Tibial artery (tissue), 4 donors: ENCODE measurements at regions of chr19 and their contacts with region 1.

Region 1: GRCh38 chr19:12733369-12734176 is 911 bp downstream of the TRIR start:
- DNase-seq: no peak
- H3K4me3 ChIP-seq: peak overlapping the region; percentile 91 to 100
- H3K27ac ChIP-seq: peak overlapping the region; percentile 94 to 97
- H3K4me1 ChIP-seq: peaks cover 5 to 51% (median 39%) of the 10 kb centered on the region in 4 donors
- H3K27me3 ChIP-seq: no peaks in the 10 kb centered on the region
- CTCF ChIP-seq: no peak

Region 2: DNA sequence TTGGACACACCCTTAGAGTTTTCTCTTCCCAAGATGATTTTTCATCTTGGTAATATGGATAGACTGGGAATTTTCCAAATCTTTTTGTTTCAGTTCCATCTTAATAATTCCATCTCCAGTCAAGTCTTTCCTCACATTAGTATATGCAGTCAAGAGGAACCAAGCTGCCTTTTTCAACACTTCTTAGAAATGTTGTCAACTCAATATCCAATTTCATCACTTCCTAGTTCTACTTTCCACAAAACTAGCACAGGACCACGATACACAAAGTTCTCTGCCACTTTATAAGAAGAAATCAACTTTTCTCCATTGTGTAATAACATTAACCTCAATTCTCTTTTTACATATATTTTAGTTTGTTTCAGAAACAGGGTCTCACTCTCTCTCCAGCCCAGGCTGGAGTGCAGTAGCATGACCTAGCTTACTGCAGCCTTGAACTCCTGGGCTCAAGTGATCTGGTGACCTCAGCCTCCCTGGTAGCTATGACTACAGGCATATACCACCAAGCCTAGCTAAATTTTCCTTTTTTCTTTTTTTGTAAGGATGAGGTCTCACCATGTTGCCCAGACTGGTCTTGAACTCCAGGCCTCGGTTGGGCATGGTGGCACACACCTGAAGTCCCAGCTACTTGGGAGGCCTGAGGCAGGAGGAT is 308.2 kb before region 1 on chr19:
- intact Hi-C with region 1: no loop called
- DNase-seq: no peak
- H3K4me3 ChIP-seq: no peak overlapping the region
- H3K27ac ChIP-seq: no peak overlapping the region
- H3K4me1 ChIP-seq: no peaks in the 10 kb centered on the region
- H3K27me3 ChIP-seq: no peaks in the 10 kb centered on the region
- CTCF ChIP-seq: no peak

Region 3: GRCh38 chr19:12596927-12597548 is 136.5 kb before region 1 on chr19:
- intact Hi-C with region 1: no loop called
- DNase-seq: peak in 1 of 2 donors; percentile 47
- H3K4me3 ChIP-seq: no peak overlapping the region
- H3K27ac ChIP-seq: no peak overlapping the region
- H3K4me1 ChIP-seq: no peaks in the 10 kb centered on the region
- H3K27me3 ChIP-seq: no peaks in the 10 kb centered on the region
- CTCF ChIP-seq: no peak

Region 4: DNA sequence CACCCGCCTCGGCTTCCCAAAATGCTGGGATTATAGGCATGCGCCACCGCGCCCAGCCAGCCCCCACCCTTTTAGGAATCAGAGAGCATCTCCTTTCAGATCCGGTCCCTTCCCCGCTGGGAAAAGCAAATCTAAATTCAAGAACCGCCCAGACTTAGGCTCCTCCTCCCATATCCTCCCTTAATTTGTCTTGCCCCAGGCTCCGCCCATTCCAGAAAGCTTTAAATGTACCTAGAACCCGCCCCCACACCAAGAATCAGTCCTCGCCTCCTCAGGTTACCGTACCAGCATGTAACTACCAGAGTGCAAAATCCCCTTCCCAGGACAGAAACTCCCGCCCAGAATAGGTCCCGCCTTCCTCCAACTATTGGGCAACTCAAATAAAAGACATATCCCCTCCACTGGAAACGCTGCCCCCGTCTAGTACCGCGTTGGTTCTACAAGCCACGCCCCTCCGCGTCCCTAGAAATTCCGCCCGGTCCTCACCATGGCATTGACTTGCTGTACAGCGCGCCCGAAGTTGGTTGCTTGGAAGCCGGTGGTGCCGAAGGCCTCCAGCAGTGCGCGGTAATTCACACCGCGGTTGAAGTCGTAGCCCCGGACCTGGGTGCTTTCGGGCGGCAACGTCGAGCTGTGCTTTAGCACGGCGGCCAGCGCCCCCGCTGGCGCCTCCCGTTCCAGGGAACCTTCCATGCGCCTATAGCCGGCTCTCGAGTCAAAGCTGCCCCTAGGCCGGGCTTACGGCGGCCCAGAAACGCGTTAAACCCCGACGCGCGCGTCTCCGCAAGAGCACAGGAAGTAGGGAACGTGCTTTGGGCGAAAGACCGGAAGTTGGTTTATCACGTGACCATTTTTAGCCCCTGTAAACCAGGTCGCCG is 52.3 kb before region 1 on chr19 and contains the start of gene DHPS:
- intact Hi-C with region 1: loop called (anchors 2 kb)
- DNase-seq: peak; percentile 94 to 96
- H3K4me3 ChIP-seq: peak within 1 kb of the TSS; percentile 81 to 85
- H3K27ac ChIP-seq: peak within 1 kb of the TSS; percentile 92 to 94
- H3K4me1 ChIP-seq: peaks cover 0 to 25% (median 6%) of the 10 kb centered on the region in 4 donors
- H3K27me3 ChIP-seq: no peaks in the 10 kb centered on the region
- CTCF ChIP-seq: no peak

Region 5: GRCh38 chr19:12766051-12766521 is 32.5 kb after region 1 on chr19:
- intact Hi-C with region 1: no loop called
- DNase-seq: peak; percentile 72 to 86
- H3K4me3 ChIP-seq: peak overlapping the region; percentile 39 to 40
- H3K27ac ChIP-seq: peak overlapping the region in 1 of 2 donors; percentile 27
- H3K4me1 ChIP-seq: peaks cover 0 to 8% (median 2%) of the 10 kb centered on the region in 4 donors
- H3K27me3 ChIP-seq: no peaks in the 10 kb centered on the region
- CTCF ChIP-seq: peak; percentile 67 to 77